ENCODE measurements at regions of chr19 and their contacts with region 1.

Region 1: DNA sequence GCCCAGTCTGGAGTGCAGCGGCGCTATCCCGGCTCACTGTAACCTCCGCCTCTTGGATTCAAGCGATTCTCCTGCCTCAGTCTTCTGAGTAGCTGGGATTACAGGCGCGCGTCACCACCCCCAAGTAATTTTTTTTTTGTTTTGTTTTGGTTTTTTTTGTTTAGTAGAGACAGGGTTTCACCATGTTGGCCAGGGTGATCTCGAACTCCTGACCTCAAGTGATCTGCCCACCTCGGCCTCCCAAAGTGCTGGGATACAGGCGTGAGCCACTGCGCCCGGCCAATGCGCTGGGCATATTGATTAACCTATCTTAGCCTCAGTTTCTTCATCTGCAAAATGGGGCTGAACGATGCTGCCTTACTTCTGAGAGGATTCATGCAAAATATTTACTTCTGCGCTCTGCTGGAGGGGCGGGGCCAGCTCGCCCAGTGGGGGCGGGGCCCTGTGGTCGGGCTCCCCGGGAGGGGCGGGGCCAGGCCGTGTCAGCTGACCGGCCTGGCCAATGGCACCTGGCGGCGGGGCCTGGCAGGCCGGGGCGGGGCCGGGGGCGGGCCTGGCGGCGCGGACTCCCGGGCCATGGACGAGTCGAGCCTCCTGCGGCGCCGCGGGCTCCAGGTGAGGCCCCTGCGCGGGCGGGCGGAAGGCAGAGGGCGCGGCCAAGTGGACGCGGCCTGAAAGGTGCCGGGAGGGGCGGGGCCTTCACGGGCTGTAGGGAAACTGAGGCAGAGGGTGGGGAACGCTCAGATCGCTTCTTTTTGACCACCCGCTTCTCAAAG is at the start of gene MAST3:
- DNase-seq: peak; percentile 95
- H3K4me3 Mint-ChIP-seq: peak within 1 kb of the TSS; percentile 83
- H3K27ac Mint-ChIP-seq: peak within 1 kb of the TSS; percentile 58
- H3K4me1 Mint-ChIP-seq: peaks cover 24% of the 10 kb centered on the region
- H3K27me3 Mint-ChIP-seq: no peaks in the 10 kb centered on the region
- total RNA-seq, gene MAST3: 22.5 to 23.8 TPM

Region 2: GRCh38 chr19:18109733-18110595 is 12.6 kb after region 1 on chr19:
- CTCF ChIA-PET with region 1: interaction called, 10 read pairs
- POLR2A ChIA-PET with region 1: interaction called, 6 read pairs
- intact Hi-C with region 1: no loop called
- DNase-seq: peak; percentile 52
- H3K4me3 Mint-ChIP-seq: peak overlapping the region; percentile 72
- H3K27ac Mint-ChIP-seq: no peak overlapping the region
- H3K4me1 Mint-ChIP-seq: peaks cover 6% of the 10 kb centered on the region
- H3K27me3 Mint-ChIP-seq: no peaks in the 10 kb centered on the region

Measured in activated CD4-positive, alpha-beta memory T cell treated with anti-CD3 and anti-CD28 coated beads for 36 hours (primary cell).